ENCODE measurements at regions of chr10 and their contacts with region 1.

Region 1: GRCh38 chr10:98170249-98171117 is 36.0 kb downstream of the R3HCC1L start:
- DNase-seq: peak; percentile 19
- ATAC-seq: peak; percentile 82
- H3K4me3 ChIP-seq: no peak overlapping the region
- H3K27ac ChIP-seq: no peak overlapping the region
- H3K4me1 ChIP-seq: peaks cover 24% of the 10 kb centered on the region
- H3K27me3 ChIP-seq: no peaks in the 10 kb centered on the region
- CTCF ChIP-seq: peak; percentile 71 to 76 (median 75)
- EP300 ChIP-seq: no peak
- POLR2A ChIP-seq: no peak
- RAD21 ChIP-seq: peak; percentile 62

Region 2: DNA sequence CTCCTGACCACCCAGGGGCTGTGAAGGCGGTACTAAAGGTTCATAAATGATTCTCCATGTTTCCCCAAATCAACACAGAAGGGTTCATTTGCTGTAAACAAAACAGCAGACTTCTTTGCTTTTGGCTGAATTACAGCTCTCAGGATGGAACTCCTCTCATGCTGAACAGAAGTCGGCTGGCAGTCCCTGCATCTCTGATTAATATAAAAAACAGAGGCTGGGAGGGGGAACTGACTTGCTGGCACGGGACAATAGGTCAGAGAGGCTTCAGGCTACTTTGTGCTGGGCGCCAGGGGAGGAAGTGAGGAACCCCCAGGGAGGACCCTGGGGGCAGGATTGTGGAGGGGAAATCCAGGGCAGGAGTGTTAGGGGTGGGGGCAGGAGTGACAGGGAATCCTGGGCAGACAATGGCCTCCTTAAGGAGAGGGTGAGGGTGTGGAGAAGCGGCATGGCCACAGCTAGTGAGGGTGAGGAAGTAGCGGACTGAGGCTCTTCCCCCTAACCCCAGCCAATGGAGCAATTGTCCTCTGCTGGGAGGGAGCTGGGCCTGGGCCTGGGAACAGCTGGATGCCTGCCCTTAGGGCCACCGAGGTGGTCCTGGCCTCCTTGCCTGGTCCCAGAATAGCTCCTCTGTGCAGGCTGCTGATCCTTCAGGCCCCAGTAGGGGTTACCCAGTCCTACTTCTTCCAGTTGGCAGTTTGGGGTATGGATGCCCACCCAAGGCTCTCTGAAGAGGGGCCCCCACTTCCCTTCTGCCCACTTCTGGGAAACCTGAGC is 389.5 kb before region 1 on chr10:
- CTCF ChIA-PET with region 1: no interaction called
- POLR2A ChIA-PET with region 1: no interaction called
- RAD21 ChIA-PET with region 1: no interaction called
- SMC1A ChIA-PET with region 1: no interaction called
- in situ Hi-C with region 1: no loop called
- intact Hi-C with region 1: no loop called
- DNase-seq: no peak
- ATAC-seq: no peak; the same call in 1 of the 3 replicates
- H3K4me3 ChIP-seq: no peak overlapping the region
- H3K27ac ChIP-seq: no peak overlapping the region
- H3K4me1 ChIP-seq: no peaks in the 10 kb centered on the region
- H3K27me3 ChIP-seq: no peaks in the 10 kb centered on the region
- CTCF ChIP-seq: no peak
- EP300 ChIP-seq: no peak
- POLR2A ChIP-seq: no peak
- RAD21 ChIP-seq: no peak

Region 3: DNA sequence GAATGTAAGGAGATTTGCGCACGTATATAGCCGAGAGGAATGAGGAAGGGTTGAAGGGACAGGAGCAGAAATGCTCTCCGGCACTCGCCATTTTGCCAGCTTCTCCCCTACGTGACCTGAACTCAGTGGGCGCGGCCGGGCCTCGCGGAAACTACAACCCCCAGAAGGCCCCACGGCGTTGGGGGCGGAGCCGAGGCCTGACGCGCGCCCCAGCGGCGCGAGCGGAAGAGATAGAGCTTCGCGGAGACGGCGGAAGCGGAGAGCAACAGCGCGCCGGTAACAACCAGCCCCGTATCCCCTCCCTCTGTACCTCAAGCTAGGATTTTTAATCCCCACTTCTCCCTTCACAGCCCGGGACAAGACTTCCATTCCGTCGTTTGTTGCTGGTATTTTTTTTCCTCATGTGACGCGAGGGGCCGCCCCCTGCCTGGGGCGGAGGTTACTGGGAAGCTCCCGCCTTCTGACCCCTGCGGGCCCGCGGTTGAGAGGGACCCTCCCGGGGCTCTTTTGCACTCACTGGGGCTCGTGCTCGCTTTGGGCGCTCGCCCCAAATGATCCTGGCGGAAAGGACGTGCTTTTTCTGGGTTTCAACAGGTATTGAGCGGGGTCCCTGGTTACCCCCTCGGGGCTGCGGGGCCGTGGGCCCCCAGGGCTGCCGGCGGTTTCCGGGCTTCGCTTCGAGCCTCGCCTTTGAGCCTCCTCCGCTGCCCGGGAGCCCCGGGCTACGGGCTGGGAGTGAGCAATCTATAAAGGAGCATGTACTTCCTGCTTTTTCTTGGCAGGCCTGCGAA is 35.9 kb before region 1 on chr10 and contains the start of gene R3HCC1L:
- CTCF ChIA-PET with region 1: interaction called, 25 read pairs
- POLR2A ChIA-PET with region 1: interaction called, 6 read pairs
- RAD21 ChIA-PET with region 1: interaction called, 7 read pairs
- SMC1A ChIA-PET with region 1: interaction called, 10 read pairs
- in situ Hi-C with region 1: no loop called
- intact Hi-C with region 1: no loop called
- DNase-seq: peak; percentile 71
- ATAC-seq: peak; percentile 93
- H3K4me3 ChIP-seq: peak within 1 kb of the TSS; percentile 92
- H3K27ac ChIP-seq: peak within 1 kb of the TSS; percentile 94
- H3K4me1 ChIP-seq: peaks cover 16% of the 10 kb centered on the region
- H3K27me3 ChIP-seq: no peaks in the 10 kb centered on the region
- CTCF ChIP-seq: no peak
- EP300 ChIP-seq: peak in 1 of 2 experiments; percentile 9; a peak in 1 of 4 replicates
- POLR2A ChIP-seq: peak; percentile 95
- RAD21 ChIP-seq: no peak
- polyA plus RNA-seq, gene R3HCC1L: 11.3 to 14.7 TPM

Region 4: DNA sequence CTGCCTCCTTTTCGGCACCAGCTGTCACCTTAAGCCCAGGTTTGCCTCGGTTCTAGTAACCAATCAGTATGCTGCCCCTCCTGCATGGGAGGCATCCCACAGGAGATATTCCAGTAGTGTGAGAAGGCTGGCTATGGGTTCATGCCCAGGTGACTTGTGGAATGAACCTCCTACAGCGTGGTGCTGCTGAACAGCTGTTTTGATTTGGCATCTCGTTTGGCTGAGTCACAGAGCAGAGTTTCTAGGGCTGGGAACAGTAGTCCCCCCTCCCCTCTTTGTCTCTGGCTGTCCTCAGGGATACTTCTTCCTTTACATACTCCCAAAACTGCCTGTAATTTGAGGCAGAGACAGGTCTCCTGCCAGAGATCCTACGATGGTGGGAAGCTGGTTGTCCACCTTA is 19.9 kb before region 1 on chr10:
- CTCF ChIA-PET with region 1: interaction called, 12 read pairs
- POLR2A ChIA-PET with region 1: no interaction called
- RAD21 ChIA-PET with region 1: interaction called, 5 read pairs
- SMC1A ChIA-PET with region 1: interaction called, 4 read pairs
- in situ Hi-C with region 1: no loop called
- intact Hi-C with region 1: no loop called
- DNase-seq: no peak
- ATAC-seq: no peak
- H3K4me3 ChIP-seq: no peak overlapping the region
- H3K27ac ChIP-seq: no peak overlapping the region
- H3K4me1 ChIP-seq: no peaks in the 10 kb centered on the region
- H3K27me3 ChIP-seq: no peaks in the 10 kb centered on the region
- CTCF ChIP-seq: no peak
- EP300 ChIP-seq: no peak
- POLR2A ChIP-seq: no peak
- RAD21 ChIP-seq: no peak

Region 5: DNA sequence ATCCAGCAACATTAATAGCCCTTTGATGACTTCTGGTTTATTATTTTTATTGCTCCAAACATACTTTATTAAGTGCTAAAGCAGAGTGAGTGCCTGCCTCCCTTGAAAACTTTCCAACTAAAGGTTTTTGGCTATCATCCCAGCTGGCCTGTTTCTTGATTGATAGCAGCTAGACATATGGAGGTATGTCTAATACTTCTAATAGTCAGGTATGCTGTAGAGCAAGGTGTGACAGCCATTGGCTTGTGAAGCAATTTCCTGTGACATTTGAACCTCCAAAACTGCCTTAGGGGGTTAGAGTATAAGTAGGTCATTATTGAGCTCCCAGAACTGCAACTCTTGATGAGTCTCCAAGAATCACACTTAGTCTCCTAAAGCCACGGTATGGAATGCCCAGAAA is 41.7 kb after region 1 on chr10:
- CTCF ChIA-PET with region 1: interaction called, 10 read pairs
- POLR2A ChIA-PET with region 1: no interaction called
- RAD21 ChIA-PET with region 1: no interaction called
- SMC1A ChIA-PET with region 1: interaction called, 3 read pairs
- in situ Hi-C with region 1: no loop called
- intact Hi-C with region 1: no loop called
- DNase-seq: no peak
- ATAC-seq: no peak
- H3K4me3 ChIP-seq: no peak overlapping the region
- H3K27ac ChIP-seq: no peak overlapping the region
- H3K4me1 ChIP-seq: no peaks in the 10 kb centered on the region
- H3K27me3 ChIP-seq: no peaks in the 10 kb centered on the region
- CTCF ChIP-seq: no peak
- EP300 ChIP-seq: no peak
- POLR2A ChIP-seq: no peak
- RAD21 ChIP-seq: no peak

Region 6: DNA sequence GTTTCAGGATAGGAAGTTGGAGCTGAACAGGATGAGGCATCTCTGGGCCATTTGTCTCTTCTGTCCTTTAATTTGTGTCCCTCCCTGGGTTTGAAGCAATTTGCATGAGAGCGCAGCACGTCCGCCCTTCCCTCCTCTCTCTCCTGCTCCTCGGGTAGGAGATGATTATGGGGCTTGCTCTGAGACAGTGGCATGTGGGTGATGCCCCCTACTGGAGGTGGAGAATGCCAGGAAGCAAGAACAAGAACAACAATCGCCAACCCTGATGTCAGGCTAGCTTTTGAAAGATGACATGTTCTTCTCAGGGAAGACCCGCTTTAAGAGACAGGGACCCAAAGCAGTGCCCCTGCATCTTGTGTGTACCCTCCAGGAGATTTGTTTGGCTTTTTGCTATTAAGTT is 161.4 kb after region 1 on chr10:
- CTCF ChIA-PET with region 1: interaction called, 27 read pairs
- POLR2A ChIA-PET with region 1: no interaction called
- RAD21 ChIA-PET with region 1: no interaction called
- SMC1A ChIA-PET with region 1: no interaction called
- in situ Hi-C with region 1: no loop called
- intact Hi-C with region 1: no loop called
- DNase-seq: no peak
- ATAC-seq: peak; percentile 82
- H3K4me3 ChIP-seq: no peak overlapping the region
- H3K27ac ChIP-seq: no peak overlapping the region
- H3K4me1 ChIP-seq: no peaks in the 10 kb centered on the region
- H3K27me3 ChIP-seq: peaks cover 0 to 8% of the 10 kb centered on the region in 2 experiments; a peak in 2 of 4 replicates
- CTCF ChIP-seq: peak; percentile 39 to 57 (median 41)
- EP300 ChIP-seq: no peak
- POLR2A ChIP-seq: no peak
- RAD21 ChIP-seq: no peak

Measured in GM12878 (cell line).